H1 (cell line): ENCODE measurements at regions of chr19 and their contacts with region 1.

Region 1: GRCh38 chr19:3075895-3076431 is 13.7 kb upstream of the TLE5 start:
- DNase-seq: peak in 1 of 2 experiments; percentile 91
- H3K4me3 ChIP-seq: peak overlapping the region in 3 of 4 experiments; percentile 15 to 48 (median 18); a peak in 4 of 8 replicates
- H3K27ac ChIP-seq: no peak overlapping the region
- H3K4me1 ChIP-seq: peaks cover 0 to 4% (median 0%) of the 10 kb centered on the region in 4 experiments; a peak in 1 of 7 replicates
- H3K27me3 ChIP-seq: peaks cover 0 to 4% (median 1%) of the 10 kb centered on the region in 4 experiments; a peak in 1 of 7 replicates
- CTCF ChIP-seq: peak; percentile 88 to 95 (median 92)
- EP300 ChIP-seq: peak in 1 of 2 experiments; percentile 13; a peak in 1 of 3 replicates
- POLR2A ChIP-seq: no peak
- RAD21 ChIP-seq: peak; percentile 91 to 94

Region 2: DNA sequence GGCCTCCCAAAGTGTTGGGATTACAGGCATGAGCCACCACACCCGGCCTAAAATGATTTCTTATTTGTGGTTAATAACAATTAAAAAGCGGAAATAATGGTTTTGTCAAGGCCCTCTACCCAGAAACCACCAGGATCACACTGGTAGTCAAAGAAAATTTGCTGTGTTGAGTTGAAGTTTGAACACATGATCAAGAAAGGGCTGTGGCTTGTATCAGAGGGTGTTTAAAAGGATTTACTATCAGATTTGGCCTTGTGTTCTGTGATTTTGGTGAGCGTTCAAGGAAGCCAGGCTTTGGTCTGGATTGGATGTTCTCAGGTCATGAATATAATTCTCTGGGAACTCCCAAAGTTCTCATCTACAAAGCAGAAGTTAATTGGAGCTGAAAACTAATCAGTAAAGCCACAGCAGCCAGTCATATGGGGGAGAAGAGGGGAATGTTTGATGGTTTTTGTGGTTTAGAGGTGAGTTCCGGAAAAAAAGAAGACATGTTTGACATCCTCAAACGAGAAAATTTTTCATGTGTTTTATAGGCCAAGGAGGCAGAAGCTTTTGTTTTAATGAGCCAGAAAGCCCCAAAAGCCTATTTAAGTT is 219.4 kb before region 1 on chr19:
- CTCF ChIA-PET with region 1: no interaction called
- POLR2A ChIA-PET with region 1: no interaction called
- DNase-seq: no peak
- H3K4me3 ChIP-seq: no peak overlapping the region
- H3K27ac ChIP-seq: no peak overlapping the region
- H3K4me1 ChIP-seq: no peaks in the 10 kb centered on the region
- H3K27me3 ChIP-seq: no peaks in the 10 kb centered on the region; a peak in 1 of 7 replicates
- CTCF ChIP-seq: no peak
- EP300 ChIP-seq: no peak
- POLR2A ChIP-seq: no peak
- RAD21 ChIP-seq: no peak

Region 3: GRCh38 chr19:2923510-2923909 is 152.5 kb before region 1 on chr19:
- CTCF ChIA-PET with region 1: no interaction called
- POLR2A ChIA-PET with region 1: no interaction called
- DNase-seq: no peak
- H3K4me3 ChIP-seq: no peak overlapping the region
- H3K27ac ChIP-seq: no peak overlapping the region
- H3K4me1 ChIP-seq: peaks cover 0 to 9% (median 2%) of the 10 kb centered on the region in 4 experiments; a peak in 3 of 7 replicates
- H3K27me3 ChIP-seq: no peaks in the 10 kb centered on the region
- CTCF ChIP-seq: no peak
- EP300 ChIP-seq: no peak
- POLR2A ChIP-seq: no peak
- RAD21 ChIP-seq: no peak

Region 4: GRCh38 chr19:2950286-2951124 is 125.5 kb before region 1 on chr19:
- CTCF ChIA-PET with region 1: interaction called, 15 read pairs
- POLR2A ChIA-PET with region 1: no interaction called
- DNase-seq: peak; percentile 99 to 100
- H3K4me3 ChIP-seq: peak overlapping the region; percentile 73 to 98 (median 90)
- H3K27ac ChIP-seq: peak overlapping the region; percentile 74
- H3K4me1 ChIP-seq: peaks cover 0 to 6% (median 4%) of the 10 kb centered on the region in 4 experiments; a peak in 4 of 7 replicates
- H3K27me3 ChIP-seq: no peaks in the 10 kb centered on the region
- CTCF ChIP-seq: peak in 1 of 3 experiments; percentile 11; a peak in 1 of 4 replicates
- EP300 ChIP-seq: no peak
- POLR2A ChIP-seq: peak; percentile 87 to 96
- RAD21 ChIP-seq: no peak

Region 5: GRCh38 chr19:2962045-2962561 is 113.9 kb before region 1 on chr19:
- CTCF ChIA-PET with region 1: interaction called, 14 read pairs
- POLR2A ChIA-PET with region 1: interaction called, 3 read pairs
- DNase-seq: peak in 1 of 2 experiments; percentile 69
- H3K4me3 ChIP-seq: no peak overlapping the region
- H3K27ac ChIP-seq: no peak overlapping the region
- H3K4me1 ChIP-seq: no peaks in the 10 kb centered on the region
- H3K27me3 ChIP-seq: no peaks in the 10 kb centered on the region; a peak in 1 of 7 replicates
- CTCF ChIP-seq: peak in 2 of 3 experiments; percentile 82 to 83; a peak in 3 of 4 replicates
- EP300 ChIP-seq: no peak
- POLR2A ChIP-seq: no peak
- RAD21 ChIP-seq: peak; percentile 97 to 98

Region 6: DNA sequence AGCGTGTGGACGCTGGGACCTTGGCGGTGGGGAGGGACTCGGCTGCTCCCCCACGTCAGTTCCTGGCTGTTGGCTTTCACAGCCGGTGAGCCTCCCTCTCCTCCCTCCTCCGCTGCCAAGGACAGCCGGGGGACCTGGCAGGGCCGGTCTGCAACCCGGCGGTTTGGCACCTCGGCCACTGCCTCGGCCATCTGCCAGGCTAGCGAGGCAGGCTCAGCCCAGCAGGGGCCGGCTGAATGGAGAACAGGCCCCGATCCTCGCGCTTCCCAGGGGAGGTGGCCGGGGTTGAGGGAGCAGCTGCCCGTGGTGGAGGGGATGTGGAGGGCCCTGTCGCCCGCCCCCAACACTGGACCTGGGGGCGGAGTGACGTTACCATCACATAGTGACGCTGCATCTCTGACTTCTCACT is 18.7 kb before region 1 on chr19:
- CTCF ChIA-PET with region 1: interaction called, 10 read pairs
- POLR2A ChIA-PET with region 1: interaction called, 3 read pairs
- DNase-seq: peak in 1 of 2 experiments; percentile 64
- H3K4me3 ChIP-seq: peak overlapping the region in 1 of 4 experiments; percentile 22; a peak in 2 of 8 replicates
- H3K27ac ChIP-seq: no peak overlapping the region
- H3K4me1 ChIP-seq: peaks cover 3 to 36% (median 27%) of the 10 kb centered on the region in 4 experiments
- H3K27me3 ChIP-seq: no peaks in the 10 kb centered on the region; a peak in 1 of 7 replicates
- CTCF ChIP-seq: no peak
- EP300 ChIP-seq: peak in 1 of 2 experiments; percentile 98; a peak in 1 of 3 replicates
- POLR2A ChIP-seq: no peak
- RAD21 ChIP-seq: no peak

Region 7: DNA sequence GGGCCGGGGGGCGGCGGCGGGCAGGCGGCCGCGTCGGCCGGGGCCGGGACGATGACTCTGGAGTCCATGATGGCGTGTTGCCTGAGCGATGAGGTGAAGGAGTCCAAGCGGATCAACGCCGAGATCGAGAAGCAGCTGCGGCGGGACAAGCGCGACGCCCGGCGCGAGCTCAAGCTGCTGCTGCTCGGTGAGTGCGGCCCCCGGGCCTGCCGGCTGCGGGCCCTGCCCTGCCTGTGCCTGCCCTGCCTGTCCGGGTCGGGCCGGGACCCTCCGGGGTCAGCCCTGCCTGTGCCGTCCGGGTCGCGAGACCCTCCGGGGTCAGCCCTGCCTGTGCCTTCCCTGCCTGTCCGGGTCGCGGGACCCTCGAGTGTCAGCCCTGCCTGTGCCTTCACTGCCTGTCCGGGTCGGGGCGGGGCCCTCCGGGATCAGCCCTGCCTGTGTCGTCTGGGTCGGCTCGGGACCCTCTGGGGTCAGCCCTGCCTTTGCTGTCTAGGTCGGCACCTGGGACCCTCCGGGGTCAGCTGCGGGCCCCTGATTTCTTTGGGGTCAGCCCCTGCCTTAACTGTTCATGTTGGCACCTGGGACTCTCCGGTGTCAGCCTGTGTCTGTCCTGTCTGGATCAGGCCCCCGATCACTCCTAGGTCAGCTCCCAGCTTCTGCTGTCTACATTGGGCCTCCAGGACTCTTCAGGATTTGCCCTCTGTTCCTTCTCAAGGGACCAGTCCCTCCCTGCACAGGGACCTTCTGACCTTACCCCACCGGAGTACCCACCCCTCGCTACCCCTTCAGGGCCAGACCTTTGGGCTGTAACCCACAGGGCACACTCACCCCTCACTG is 18.9 kb after region 1 on chr19:
- CTCF ChIA-PET with region 1: interaction called, 339 read pairs
- POLR2A ChIA-PET with region 1: interaction called, 6 read pairs
- DNase-seq: no peak
- H3K4me3 ChIP-seq: peak overlapping the region; percentile 74 to 82 (median 79)
- H3K27ac ChIP-seq: no peak overlapping the region
- H3K4me1 ChIP-seq: peaks cover 3 to 18% (median 15%) of the 10 kb centered on the region in 4 experiments; a peak in 6 of 7 replicates
- H3K27me3 ChIP-seq: no peaks in the 10 kb centered on the region
- CTCF ChIP-seq: no peak
- EP300 ChIP-seq: no peak
- POLR2A ChIP-seq: no peak
- RAD21 ChIP-seq: no peak

Region 8: DNA sequence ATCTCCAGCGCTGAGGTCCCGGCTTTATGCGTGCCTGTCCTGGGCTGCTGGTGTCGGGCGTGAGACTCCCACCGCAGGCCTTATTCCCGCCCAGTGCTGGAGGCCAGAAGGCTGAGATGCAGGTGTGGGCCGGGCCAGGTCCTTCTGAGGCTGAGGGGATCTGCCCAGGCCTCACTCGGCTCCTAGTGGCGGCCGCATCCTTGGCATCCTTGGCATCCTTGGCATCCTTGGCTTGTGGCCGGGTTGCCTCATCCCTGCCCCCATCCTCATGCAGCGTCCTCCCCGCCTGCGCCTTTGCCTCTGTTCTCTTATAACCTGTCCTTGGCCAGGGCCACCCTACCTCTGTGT is 40.3 kb after region 1 on chr19:
- CTCF ChIA-PET with region 1: interaction called, 339 read pairs
- POLR2A ChIA-PET with region 1: no interaction called
- DNase-seq: peak in 1 of 2 experiments; percentile 31
- H3K4me3 ChIP-seq: no peak overlapping the region
- H3K27ac ChIP-seq: no peak overlapping the region
- H3K4me1 ChIP-seq: peaks cover 0 to 14% (median 6%) of the 10 kb centered on the region in 4 experiments; a peak in 3 of 7 replicates
- H3K27me3 ChIP-seq: peaks cover 0 to 2% (median 0%) of the 10 kb centered on the region in 4 experiments; a peak in 1 of 7 replicates
- CTCF ChIP-seq: no peak
- EP300 ChIP-seq: no peak
- POLR2A ChIP-seq: no peak
- RAD21 ChIP-seq: no peak

Region 9: GRCh38 chr19:3140667-3141038 is 64.7 kb after region 1 on chr19:
- CTCF ChIA-PET with region 1: no interaction called
- POLR2A ChIA-PET with region 1: no interaction called
- DNase-seq: no peak
- H3K4me3 ChIP-seq: no peak overlapping the region
- H3K27ac ChIP-seq: no peak overlapping the region
- H3K4me1 ChIP-seq: no peaks in the 10 kb centered on the region
- H3K27me3 ChIP-seq: no peaks in the 10 kb centered on the region
- CTCF ChIP-seq: no peak
- EP300 ChIP-seq: no peak
- POLR2A ChIP-seq: no peak
- RAD21 ChIP-seq: no peak